PC-3 (cell line): ENCODE measurements at regions of chr12 and their contacts with region 1.

Region 1: DNA sequence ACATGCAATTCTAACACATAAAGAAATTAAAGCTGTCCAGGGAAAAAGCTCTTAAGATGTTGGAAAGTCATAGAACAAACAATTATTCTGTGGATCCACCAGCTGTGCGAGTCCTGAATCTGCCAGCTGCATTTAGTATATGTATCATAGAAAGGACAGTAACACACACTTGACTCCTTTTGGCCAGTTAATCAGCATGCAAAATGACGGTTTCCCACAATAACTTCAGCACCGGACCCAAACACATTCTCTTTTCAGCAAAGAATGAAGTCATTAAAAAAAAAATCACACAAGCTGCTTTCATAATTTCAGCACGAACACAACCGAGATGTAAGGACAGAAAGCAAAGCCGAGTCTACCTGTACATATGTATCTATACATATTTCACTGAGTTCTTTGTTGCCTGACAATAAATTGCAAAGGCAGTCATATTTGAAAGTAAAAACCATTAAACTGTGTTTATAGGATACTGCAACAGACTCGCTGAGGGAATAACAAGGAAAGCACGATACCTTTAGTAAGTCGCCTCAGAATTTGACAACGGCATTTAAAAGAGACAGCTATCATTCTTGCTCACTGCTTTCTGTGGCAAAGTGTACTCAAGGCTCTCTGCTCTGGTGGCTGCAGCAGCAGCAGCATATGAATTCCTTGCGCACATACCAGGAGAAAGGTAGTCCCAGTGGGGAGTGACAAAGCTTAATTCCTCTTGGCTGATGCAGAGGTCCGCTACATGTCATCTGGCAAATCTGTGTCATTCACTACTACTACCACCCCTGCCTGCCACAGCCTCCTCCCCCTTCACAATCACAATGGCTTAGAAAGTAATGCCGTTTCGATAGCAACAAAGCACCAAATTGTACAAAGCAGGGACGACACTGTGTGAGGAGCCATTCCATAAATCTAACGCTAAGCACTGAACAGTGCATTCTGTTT is at the start of gene GRIP1:
- DNase-seq: peak; percentile 75
- ATAC-seq: peak; percentile 97
- H3K4me3 ChIP-seq: peak within 1 kb of the TSS; percentile 66
- H3K27ac ChIP-seq: no peak within 1 kb of the TSS
- H3K4me1 ChIP-seq: peaks cover 7% of the 10 kb centered on the region; the same call in 1 of the 2 replicates
- H3K27me3 ChIP-seq: no peaks in the 10 kb centered on the region
- CTCF ChIP-seq: no peak
- total RNA-seq, gene GRIP1: 2.0 and 8.4 TPM in 2 replicates

Region 2: GRCh38 chr12:66538970-66539369 is 139.6 kb before region 1 on chr12:
- CTCF ChIA-PET with region 1: no interaction called
- POLR2A ChIA-PET with region 1: interaction called, 12 read pairs
- intact Hi-C with region 1: no loop called
- DNase-seq: peak; percentile 45
- ATAC-seq: no peak
- H3K4me3 ChIP-seq: no peak overlapping the region
- H3K27ac ChIP-seq: no peak overlapping the region
- H3K4me1 ChIP-seq: no peaks in the 10 kb centered on the region
- H3K27me3 ChIP-seq: no peaks in the 10 kb centered on the region
- CTCF ChIP-seq: no peak

Region 3: DNA sequence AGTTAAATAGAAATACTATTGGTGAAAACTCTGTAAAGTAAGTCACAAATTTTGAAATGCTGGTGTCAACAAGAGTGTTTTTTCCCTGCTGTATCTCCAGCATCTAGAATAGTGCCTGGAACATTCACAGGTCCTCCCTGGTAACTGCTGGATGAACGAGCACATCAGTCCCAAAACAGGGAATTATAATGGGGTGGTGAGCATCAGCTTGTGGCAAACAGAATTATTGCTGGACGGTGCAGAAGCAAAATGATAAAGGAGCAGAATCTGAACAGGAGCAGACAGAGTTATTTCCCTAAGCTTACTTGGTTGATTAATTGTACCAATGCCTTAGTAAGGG is 129.6 kb before region 1 on chr12:
- CTCF ChIA-PET with region 1: no interaction called
- POLR2A ChIA-PET with region 1: no interaction called
- intact Hi-C with region 1: no loop called
- DNase-seq: no peak
- ATAC-seq: no peak
- H3K4me3 ChIP-seq: no peak overlapping the region
- H3K27ac ChIP-seq: no peak overlapping the region
- H3K4me1 ChIP-seq: no peaks in the 10 kb centered on the region
- H3K27me3 ChIP-seq: no peaks in the 10 kb centered on the region
- CTCF ChIP-seq: no peak

Region 4: DNA sequence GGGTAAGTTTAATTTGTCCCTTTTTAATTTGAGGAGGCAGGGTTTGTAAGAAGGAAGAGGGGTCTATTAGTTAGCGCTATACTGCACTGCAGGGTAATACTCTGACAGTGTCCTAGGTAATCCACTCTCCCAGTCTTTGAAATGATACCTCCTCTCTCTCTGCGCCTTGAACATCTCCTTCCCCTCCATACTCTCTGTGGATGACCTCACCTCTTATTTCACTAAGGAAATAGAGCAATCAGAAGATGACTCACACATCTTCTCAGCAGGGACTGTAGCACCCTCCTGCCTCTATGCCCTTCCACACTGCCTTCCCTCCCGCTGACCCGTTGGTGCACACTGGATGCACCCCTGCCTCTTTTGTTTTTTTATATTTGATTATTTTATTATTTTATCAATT is 93.9 kb before region 1 on chr12:
- CTCF ChIA-PET with region 1: no interaction called
- POLR2A ChIA-PET with region 1: no interaction called
- intact Hi-C with region 1: no loop called
- DNase-seq: peak; percentile 42
- ATAC-seq: peak; percentile 52; the same call in 1 of the 2 replicates
- H3K4me3 ChIP-seq: no peak overlapping the region
- H3K27ac ChIP-seq: no peak overlapping the region
- H3K4me1 ChIP-seq: peaks cover 14% of the 10 kb centered on the region
- H3K27me3 ChIP-seq: no peaks in the 10 kb centered on the region
- CTCF ChIP-seq: no peak